Activated T-helper 2 cell treated with anti-CD3 and anti-CD28 coated beads, Interferon-gamma antibody, Interleukin-2, Interleukin-4, amounts not matched to agents 10 μg/mL and 5 μg/mL and 100 μg/mL, durations not matched to agents 14 hours and 24 hours and 36 hours (primary cell): ENCODE measurements at regions of chr2 and their contacts with region 1.

Region 1: DNA sequence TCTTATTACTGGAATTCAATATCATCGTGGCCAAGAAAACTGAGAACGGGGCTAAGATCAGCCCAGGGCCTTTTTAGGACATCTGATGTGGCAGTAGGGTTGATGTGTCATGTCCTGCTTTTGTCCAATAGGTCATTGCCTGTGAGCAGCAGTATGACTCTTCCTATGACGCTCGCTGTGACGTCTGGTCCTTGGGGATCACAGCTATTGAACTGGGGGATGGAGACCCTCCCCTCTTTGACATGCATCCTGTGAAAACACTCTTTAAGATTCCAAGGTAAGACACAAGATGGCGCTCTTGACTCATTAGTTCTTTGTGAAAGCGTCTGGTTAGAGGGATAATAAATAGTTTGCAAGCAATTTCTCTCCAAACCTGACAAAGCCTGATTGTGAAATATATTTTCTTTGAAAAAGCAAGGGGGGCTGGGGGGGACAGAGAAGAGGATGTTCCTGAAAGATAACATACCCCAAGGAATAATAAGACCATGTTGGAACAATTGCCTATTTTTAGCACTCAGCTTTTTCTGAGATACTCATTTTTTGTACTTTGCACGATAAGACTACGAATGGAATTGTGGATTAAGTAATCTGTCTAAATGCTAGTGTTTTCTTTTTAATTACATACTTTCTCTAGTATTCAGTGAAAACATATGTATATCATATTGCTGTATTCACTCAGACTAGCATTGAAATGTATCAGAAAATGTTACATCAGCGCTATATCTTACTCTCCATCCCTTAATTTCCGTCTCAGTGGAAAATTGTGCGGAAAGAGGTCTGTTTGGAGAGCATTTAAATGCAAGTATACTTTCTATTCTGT is 58.1 kb downstream of the MYO3B start:
- DNase-seq: peak; percentile 11
- H3K4me3 Mint-ChIP-seq: no peak overlapping the region
- H3K27ac Mint-ChIP-seq: no peak overlapping the region
- H3K4me1 Mint-ChIP-seq: no peaks in the 10 kb centered on the region
- H3K27me3 Mint-ChIP-seq: peaks cover 36% of the 10 kb centered on the region

Region 2: DNA sequence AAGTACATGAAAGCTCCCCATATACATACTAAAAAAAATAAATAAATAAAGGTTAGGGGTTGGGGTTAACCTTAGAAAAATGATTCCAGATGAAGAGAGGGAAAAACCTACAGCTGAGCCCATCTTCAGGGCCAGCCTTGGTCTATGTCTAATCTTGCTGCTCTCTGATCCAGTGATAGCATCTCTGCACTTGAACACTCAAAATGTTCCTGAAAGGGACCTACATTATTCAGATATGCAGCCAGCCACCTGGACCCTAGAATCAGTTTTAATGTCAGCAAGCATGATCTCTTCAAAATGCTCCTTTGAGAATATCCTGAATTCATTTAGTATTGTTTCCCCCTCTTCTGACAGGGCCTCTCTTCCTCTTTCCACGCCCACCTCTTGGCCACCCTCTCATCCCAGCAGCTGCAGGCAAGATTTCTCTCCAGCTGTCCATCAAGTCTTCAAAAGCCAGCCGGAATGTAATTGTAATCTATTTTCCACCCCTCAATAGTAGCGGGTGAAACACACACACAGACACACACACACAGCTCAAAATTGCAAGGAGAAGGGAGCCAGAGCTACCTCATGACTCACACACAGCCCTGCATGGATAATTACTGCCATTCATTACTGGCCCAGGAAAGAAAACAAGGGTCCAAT is 77.4 kb after region 1 on chr2:
- intact Hi-C with region 1: loop called (anchors 5 kb)
- DNase-seq: no peak
- H3K4me3 Mint-ChIP-seq: no peak overlapping the region
- H3K27ac Mint-ChIP-seq: no peak overlapping the region
- H3K4me1 Mint-ChIP-seq: peaks cover 10% of the 10 kb centered on the region
- H3K27me3 Mint-ChIP-seq: peaks cover 18% of the 10 kb centered on the region

Region 3: GRCh38 chr2:170396799-170397459 is 160.9 kb after region 1 on chr2:
- intact Hi-C with region 1: loop called (anchors 10 kb)
- DNase-seq: no peak
- H3K4me3 Mint-ChIP-seq: no peak overlapping the region
- H3K27ac Mint-ChIP-seq: peak overlapping the region; percentile 23
- H3K4me1 Mint-ChIP-seq: peaks cover 13% of the 10 kb centered on the region
- H3K27me3 Mint-ChIP-seq: peaks cover 6% of the 10 kb centered on the region